ENCODE measurements at regions of chr3 and their contacts with region 1.

Region 1: GRCh38 chr3:116037954-116038911 is 407.1 kb downstream of the LSAMP start:
- DNase-seq: peak; percentile 33
- H3K4me3 ChIP-seq: no peak overlapping the region
- H3K27ac ChIP-seq: no peak overlapping the region
- H3K4me1 ChIP-seq: peaks cover 16% of the 10 kb centered on the region
- H3K27me3 ChIP-seq: no peaks in the 10 kb centered on the region
- CTCF ChIP-seq: no peak

Region 2: DNA sequence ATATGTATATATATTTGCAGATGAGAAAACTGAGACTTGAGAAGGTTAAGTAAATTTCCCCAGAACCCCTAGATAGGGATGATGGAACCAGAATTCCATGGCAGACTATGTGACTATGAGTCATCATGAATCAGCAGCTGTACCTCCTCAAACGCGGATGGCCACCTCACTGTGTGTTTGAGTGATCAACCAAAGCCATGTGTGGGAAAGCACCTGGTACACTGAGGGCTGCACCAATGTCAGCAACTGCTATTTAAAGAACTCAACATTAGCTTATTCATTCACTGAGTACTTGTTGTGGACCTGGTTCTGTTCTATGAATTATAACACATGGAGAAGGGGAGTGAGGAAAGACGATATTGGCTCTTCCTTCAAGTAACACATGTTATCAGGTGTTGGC is 37.9 kb before region 1 on chr3:
- CTCF ChIA-PET with region 1: no interaction called
- dilution Hi-C with region 1: no loop called
- in situ Hi-C with region 1: no loop called
- intact Hi-C with region 1: loop called (anchors 2 kb)
- DNase-seq: peak; percentile 95
- H3K4me3 ChIP-seq: no peak overlapping the region
- H3K27ac ChIP-seq: peak overlapping the region; percentile 94
- H3K4me1 ChIP-seq: peaks cover 38% of the 10 kb centered on the region
- H3K27me3 ChIP-seq: no peaks in the 10 kb centered on the region
- CTCF ChIP-seq: no peak

Measured in mammary epithelial cell (primary cell).